CD4-positive, alpha-beta memory T cell (primary cell): ENCODE measurements at regions of chr10 and their contacts with region 1.

Region 1: DNA sequence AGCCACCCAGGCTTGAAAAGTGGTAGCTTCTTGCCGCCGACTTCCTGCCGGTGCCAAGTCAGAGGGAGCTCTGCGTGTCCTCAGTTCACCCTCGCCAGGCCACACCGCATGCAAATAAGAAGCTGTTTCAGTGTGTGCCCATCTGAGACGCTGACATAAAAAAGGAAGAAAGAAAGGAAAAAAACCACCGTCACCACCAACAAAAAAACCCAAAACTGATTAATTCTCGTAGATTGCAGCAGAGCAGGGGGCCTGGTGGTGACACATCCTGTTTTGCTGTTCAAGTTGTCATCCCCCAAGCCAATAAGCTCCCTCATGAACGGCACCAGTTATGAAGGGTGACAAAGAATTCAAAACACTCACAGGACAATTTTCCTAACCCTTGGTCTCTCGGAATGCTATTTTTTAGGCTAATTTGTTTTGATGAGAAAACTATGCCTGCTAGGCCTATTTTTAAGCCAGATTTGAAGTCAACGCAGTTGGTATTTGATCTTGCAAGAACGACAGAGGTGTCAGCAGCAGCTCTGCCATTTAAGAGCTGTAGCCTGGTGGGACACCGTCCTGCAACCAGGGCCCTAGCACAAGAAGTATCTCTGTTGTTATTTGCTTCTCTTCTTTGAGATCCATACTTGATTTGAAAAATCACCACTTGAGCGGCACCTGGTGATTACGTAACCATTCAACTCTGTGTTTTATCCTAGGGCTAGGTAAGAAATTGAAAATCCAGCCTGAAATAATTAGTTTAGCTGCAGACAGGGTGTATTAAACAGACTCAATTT is 145.6 kb downstream of the PFKFB3 start:
- DNase-seq: peak; percentile 87 to 95 (median 89)
- H3K4me3 ChIP-seq: peak overlapping the region in 1 of 2 donors; percentile 43
- H3K4me3 Mint-ChIP-seq: peak overlapping the region; percentile 77 to 90 (median 80)
- H3K27ac ChIP-seq: peak overlapping the region; percentile 55
- H3K27ac Mint-ChIP-seq: peak overlapping the region; percentile 93 to 97 (median 96)
- H3K4me1 ChIP-seq: peaks cover 31% of the 10 kb centered on the region
- H3K4me1 Mint-ChIP-seq: peaks cover 35 to 56% (median 45%) of the 10 kb centered on the region in 4 donors
- H3K27me3 ChIP-seq: no peaks in the 10 kb centered on the region
- H3K27me3 Mint-ChIP-seq: no peaks in the 10 kb centered on the region

Region 2: DNA sequence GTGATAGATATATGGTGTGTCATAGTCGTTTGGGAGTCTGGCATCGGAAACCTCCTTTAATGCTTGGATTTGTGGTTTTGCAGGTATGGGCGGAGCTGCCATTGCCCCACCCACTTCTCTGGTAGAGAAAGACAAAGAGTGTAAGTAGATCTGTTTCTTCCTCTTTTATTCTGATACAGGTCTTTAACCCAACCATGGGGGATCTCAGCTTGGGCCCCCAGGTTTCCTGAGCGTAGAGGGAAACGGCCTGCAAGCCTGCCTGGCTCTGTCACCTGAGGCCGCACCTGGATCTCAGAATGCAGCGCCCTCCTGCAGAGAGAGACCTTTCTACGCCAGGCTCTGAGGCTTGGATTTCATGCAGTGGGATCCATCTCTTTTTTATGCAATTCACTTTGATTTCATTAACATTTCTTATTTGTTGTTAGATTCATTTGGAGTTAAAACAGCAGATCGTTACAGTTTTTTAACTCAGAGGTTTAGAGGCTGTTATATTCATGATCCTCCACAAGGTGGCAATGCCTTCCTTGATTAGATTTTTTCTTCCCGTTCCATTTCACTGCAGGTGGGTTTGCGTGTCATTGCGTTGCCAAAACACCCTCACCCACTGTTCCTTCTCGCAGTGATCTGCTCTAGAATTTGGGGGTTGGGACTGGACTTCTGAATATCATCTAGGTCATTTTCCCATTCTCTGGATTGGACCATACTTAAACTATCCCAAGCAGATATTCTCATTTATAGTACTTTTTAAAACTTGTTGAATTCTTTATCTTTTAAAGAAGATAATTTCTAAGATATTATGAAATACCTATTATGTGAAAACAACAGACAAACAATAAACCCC is 239.5 kb before region 1 on chr10:
- CTCF ChIA-PET with region 1: interaction called, 3 read pairs
- POLR2A ChIA-PET with region 1: no interaction called
- intact Hi-C with region 1: loop called (anchors 1 kb)
- DNase-seq: peak; percentile 57 to 69 (median 65)
- H3K4me3 ChIP-seq: no peak overlapping the region
- H3K4me3 Mint-ChIP-seq: peak overlapping the region in 7 of 8 donors; percentile 67 to 85 (median 75)
- H3K27ac ChIP-seq: peak overlapping the region; percentile 45
- H3K27ac Mint-ChIP-seq: peak overlapping the region; percentile 43 to 95 (median 91)
- H3K4me1 ChIP-seq: peaks cover 28% of the 10 kb centered on the region
- H3K4me1 Mint-ChIP-seq: peaks cover 29 to 54% (median 37%) of the 10 kb centered on the region in 4 donors
- H3K27me3 ChIP-seq: no peaks in the 10 kb centered on the region
- H3K27me3 Mint-ChIP-seq: no peaks in the 10 kb centered on the region

Region 3: DNA sequence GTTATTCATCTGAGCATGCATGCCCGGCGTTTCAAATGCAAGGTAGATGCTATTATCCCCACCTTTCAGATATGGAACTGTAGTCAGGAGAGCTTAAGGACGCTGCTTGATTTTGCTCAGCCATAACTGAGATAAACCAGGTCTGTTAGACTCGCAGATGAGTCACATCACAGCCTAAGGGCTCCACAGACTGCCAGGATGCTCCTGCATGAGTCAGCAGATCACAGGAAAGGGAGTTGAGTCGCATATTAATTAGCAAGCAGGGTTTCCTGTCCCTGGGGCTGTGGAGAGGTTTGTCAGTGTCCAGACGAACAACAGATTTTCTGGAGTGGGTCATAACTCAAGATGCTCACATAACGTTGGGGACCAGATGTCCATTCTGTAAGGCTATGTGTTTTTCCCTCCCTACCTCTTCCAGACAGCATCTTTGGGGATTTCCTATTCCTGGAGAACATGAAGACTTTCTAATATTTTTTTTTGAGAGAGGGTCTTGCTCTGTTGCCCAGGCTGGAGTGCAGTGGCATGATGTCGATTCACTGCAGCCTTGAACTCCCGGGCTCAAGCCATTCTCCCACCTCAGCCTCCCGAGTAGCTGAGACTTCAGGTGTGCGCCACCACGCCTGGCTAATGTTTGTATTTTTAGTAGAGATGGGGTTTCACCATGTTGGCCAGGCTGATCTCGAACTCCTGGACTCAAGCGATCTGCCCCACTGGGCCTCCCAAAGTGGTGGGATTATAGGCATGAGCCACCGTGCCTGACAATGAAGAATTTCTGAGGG is 108.9 kb before region 1 on chr10:
- CTCF ChIA-PET with region 1: no interaction called
- POLR2A ChIA-PET with region 1: interaction called, 6 read pairs
- intact Hi-C with region 1: loop called (anchors 1 kb)
- DNase-seq: peak in 4 of 5 donors; percentile 14 to 84 (median 20)
- H3K4me3 ChIP-seq: no peak overlapping the region
- H3K4me3 Mint-ChIP-seq: peak overlapping the region in 2 of 8 donors; percentile 13 to 32
- H3K27ac ChIP-seq: no peak overlapping the region
- H3K27ac Mint-ChIP-seq: peak overlapping the region; percentile 20 to 78 (median 63)
- H3K4me1 ChIP-seq: peaks cover 12% of the 10 kb centered on the region
- H3K4me1 Mint-ChIP-seq: peaks cover 12 to 22% (median 13%) of the 10 kb centered on the region in 4 donors
- H3K27me3 ChIP-seq: no peaks in the 10 kb centered on the region
- H3K27me3 Mint-ChIP-seq: no peaks in the 10 kb centered on the region

Region 4: GRCh38 chr10:6275022-6275997 is 73.0 kb before region 1 on chr10:
- CTCF ChIA-PET with region 1: interaction called, 6 read pairs
- POLR2A ChIA-PET with region 1: interaction called, 30 read pairs
- intact Hi-C with region 1: loop called (anchors 1 kb)
- DNase-seq: peak; percentile 81 to 98 (median 86)
- H3K4me3 ChIP-seq: peak overlapping the region in 1 of 2 donors; percentile 26
- H3K4me3 Mint-ChIP-seq: peak overlapping the region; percentile 63 to 87 (median 78)
- H3K27ac ChIP-seq: peak overlapping the region; percentile 59
- H3K27ac Mint-ChIP-seq: peak overlapping the region; percentile 91 to 98 (median 94)
- H3K4me1 ChIP-seq: peaks cover 40% of the 10 kb centered on the region
- H3K4me1 Mint-ChIP-seq: peaks cover 26 to 52% (median 37%) of the 10 kb centered on the region in 4 donors
- H3K27me3 ChIP-seq: no peaks in the 10 kb centered on the region
- H3K27me3 Mint-ChIP-seq: no peaks in the 10 kb centered on the region

Region 5: DNA sequence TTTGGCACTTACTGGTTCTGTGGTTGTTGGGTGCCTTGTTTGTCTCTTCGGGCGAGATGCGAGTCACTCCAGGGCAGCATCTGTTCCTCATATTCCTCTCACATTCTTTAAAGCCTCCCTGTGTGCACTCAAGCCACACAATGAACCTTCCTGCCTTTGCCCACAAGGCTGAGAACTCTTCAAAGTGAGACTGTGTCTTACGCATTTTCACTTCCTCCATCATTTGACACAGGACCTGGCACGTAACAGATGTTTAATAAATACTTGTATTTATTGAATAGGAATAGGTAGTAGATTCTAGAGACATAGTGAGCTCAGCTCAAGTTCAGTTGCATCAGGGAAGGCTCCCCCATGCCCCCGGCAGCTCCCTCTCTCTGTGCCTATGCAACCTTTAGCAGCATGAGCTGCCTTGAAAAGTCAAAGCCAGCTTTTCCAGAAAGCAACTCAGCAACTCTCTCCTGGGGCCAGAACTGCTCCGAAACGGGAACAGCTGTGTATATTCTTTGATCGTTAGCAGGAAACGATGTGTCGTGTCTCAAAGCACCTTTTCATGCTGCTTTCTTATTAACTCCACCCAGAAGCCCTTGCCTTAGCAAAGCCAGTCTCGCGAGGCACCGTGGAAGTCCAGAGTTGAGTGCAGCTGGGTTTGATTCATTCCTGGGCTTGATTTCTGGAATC is 48.0 kb before region 1 on chr10:
- CTCF ChIA-PET with region 1: interaction called, 3 read pairs
- POLR2A ChIA-PET with region 1: interaction called, 15 read pairs
- intact Hi-C with region 1: loop called (anchors 1 kb)
- DNase-seq: peak; percentile 56 to 76 (median 71)
- H3K4me3 ChIP-seq: peak overlapping the region in 1 of 2 donors; percentile 28
- H3K4me3 Mint-ChIP-seq: peak overlapping the region; percentile 26 to 82 (median 57)
- H3K27ac ChIP-seq: peak overlapping the region; percentile 27
- H3K27ac Mint-ChIP-seq: peak overlapping the region; percentile 72 to 95 (median 91)
- H3K4me1 ChIP-seq: peaks cover 26% of the 10 kb centered on the region
- H3K4me1 Mint-ChIP-seq: peaks cover 16 to 42% (median 28%) of the 10 kb centered on the region in 4 donors
- H3K27me3 ChIP-seq: no peaks in the 10 kb centered on the region
- H3K27me3 Mint-ChIP-seq: no peaks in the 10 kb centered on the region

Region 6: GRCh38 chr10:6328699-6329423 is 19.4 kb before region 1 on chr10:
- CTCF ChIA-PET with region 1: no interaction called
- POLR2A ChIA-PET with region 1: no interaction called
- intact Hi-C with region 1: no loop called
- DNase-seq: no peak
- H3K4me3 ChIP-seq: no peak overlapping the region
- H3K4me3 Mint-ChIP-seq: no peak overlapping the region
- H3K27ac ChIP-seq: no peak overlapping the region
- H3K27ac Mint-ChIP-seq: peak overlapping the region in 1 of 7 donors; percentile 32
- H3K4me1 ChIP-seq: no peaks in the 10 kb centered on the region
- H3K4me1 Mint-ChIP-seq: no peaks in the 10 kb centered on the region
- H3K27me3 ChIP-seq: no peaks in the 10 kb centered on the region
- H3K27me3 Mint-ChIP-seq: no peaks in the 10 kb centered on the region

Region 7: DNA sequence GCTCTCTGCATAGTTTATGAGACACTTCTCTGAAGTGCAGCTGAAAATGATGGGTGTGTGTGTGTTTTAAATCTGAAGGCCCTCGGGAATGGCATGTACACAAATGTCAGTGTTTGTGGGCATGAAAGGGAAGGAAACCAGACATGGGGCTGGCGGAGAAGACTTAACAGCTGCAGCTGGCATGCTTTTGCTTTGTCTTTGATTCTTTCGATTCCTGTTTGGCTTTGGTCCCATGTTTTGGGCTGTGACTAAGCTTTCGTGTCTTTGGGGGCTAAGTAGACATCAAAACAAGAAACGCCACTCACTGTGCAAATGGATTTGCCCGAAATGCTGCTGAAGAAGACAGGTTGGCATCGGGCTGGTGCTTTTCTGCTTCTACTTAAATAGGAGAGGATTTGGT is 33.8 kb after region 1 on chr10:
- CTCF ChIA-PET with region 1: interaction called, 3 read pairs
- POLR2A ChIA-PET with region 1: interaction called, 21 read pairs
- intact Hi-C with region 1: loop called (anchors 1 kb)
- DNase-seq: peak in 4 of 5 donors; percentile 17 to 27 (median 20)
- H3K4me3 ChIP-seq: no peak overlapping the region
- H3K4me3 Mint-ChIP-seq: peak overlapping the region; percentile 46 to 78 (median 66)
- H3K27ac ChIP-seq: no peak overlapping the region
- H3K27ac Mint-ChIP-seq: peak overlapping the region in 3 of 7 donors; percentile 68 to 77 (median 69)
- H3K4me1 ChIP-seq: peaks cover 13% of the 10 kb centered on the region
- H3K4me1 Mint-ChIP-seq: peaks cover 12 to 20% (median 14%) of the 10 kb centered on the region in 4 donors
- H3K27me3 ChIP-seq: no peaks in the 10 kb centered on the region
- H3K27me3 Mint-ChIP-seq: no peaks in the 10 kb centered on the region